WTC11 (cell line): ENCODE measurements at regions of chr17 and their contacts with region 1.

Region 1: DNA sequence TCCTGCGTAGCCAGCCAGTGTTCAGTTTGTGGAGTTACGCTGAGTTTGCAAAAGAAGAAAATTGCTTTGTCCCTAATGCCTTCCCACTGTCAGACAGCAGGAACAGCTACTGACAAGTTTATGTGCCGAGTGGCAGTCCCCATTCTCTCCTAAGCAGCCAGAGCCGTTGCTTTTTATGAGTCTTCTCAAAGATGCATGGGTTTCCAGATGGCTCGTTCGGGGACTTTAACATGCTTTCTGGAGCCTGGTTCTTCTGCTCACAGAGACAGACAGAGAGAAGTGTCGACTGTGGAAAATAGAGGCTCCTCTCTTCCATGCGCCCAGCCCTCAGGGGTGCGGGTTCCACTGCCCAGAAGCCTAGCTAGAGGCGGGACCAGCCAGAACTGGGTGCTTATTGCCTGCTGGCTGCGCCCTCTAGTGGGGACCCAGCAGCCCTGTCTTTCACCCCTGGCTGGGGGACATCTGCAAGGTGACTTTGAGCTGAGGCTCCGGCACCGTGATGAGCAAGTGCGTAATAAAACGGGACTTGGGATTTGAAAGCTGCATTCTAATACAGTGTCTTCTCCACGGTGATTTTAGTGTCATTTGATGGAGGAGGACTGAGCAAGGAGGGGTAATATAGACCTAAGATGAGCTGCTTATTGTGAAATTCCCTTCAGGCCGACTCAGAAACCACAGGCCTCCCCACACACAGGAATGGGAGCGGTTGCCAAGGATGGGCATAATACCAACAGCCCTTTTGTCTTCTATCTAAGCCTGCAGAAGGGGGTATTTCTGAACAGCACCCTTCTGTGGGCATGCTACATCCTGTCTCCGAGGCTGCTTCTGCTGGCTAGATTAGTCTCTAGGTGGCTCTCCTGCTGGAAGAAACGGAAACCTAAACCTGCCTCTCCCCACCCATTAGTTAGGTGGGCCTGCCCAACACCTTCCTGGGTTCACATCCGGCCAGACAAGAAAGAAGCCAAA is 73.1 kb downstream of the CCDC182 start:
- DNase-seq: peak; percentile 92
- ATAC-seq: peak; percentile 99
- H3K4me3 Mint-ChIP-seq: no peak overlapping the region
- H3K27ac Mint-ChIP-seq: no peak overlapping the region
- H3K4me1 Mint-ChIP-seq: peaks cover 14% of the 10 kb centered on the region
- H3K27me3 Mint-ChIP-seq: no peaks in the 10 kb centered on the region
- CTCF ChIP-seq: peak; percentile 91

Region 2: GRCh38 chr17:57440522-57441485 is 231.1 kb before region 1 on chr17:
- CTCF ChIA-PET with region 1: interaction called, 16 read pairs
- POLR2A ChIA-PET with region 1: no interaction called
- DNase-seq: peak; percentile 74
- ATAC-seq: peak; percentile 87
- H3K4me3 Mint-ChIP-seq: no peak overlapping the region
- H3K27ac Mint-ChIP-seq: peak overlapping the region; percentile 47
- H3K4me1 Mint-ChIP-seq: peaks cover 66% of the 10 kb centered on the region
- H3K27me3 Mint-ChIP-seq: no peaks in the 10 kb centered on the region
- CTCF ChIP-seq: peak; percentile 36; the same call in 1 of the 2 replicates

Region 3: DNA sequence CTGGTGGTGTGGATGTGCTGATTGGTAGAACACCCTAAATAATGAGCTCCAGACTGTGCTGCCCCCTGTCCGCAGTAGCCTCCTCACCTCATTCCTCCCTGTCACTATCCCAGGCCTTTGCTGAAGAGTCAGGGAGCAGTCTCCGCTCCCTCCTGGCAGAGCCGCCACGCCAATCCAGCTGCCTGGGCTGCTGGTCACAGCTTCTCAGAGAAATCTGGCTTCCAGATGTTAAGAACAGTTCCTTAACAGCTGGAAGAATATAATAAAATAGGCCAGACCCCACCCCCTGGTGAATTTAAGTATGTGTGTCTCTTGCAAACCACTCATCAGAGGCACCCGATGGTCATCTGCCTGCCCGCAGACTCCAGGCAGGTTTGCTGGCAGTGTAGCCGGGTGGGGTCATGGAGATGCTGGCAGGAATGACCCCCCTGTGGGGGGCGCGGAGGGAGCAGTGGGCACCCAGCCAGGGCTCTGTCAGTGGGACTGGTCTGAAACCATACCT is 87.8 kb before region 1 on chr17:
- CTCF ChIA-PET with region 1: interaction called, 11 read pairs
- POLR2A ChIA-PET with region 1: no interaction called
- DNase-seq: no peak
- ATAC-seq: peak; percentile 61
- H3K4me3 Mint-ChIP-seq: no peak overlapping the region
- H3K27ac Mint-ChIP-seq: no peak overlapping the region
- H3K4me1 Mint-ChIP-seq: peaks cover 25% of the 10 kb centered on the region
- H3K27me3 Mint-ChIP-seq: no peaks in the 10 kb centered on the region
- CTCF ChIP-seq: no peak

Region 4: DNA sequence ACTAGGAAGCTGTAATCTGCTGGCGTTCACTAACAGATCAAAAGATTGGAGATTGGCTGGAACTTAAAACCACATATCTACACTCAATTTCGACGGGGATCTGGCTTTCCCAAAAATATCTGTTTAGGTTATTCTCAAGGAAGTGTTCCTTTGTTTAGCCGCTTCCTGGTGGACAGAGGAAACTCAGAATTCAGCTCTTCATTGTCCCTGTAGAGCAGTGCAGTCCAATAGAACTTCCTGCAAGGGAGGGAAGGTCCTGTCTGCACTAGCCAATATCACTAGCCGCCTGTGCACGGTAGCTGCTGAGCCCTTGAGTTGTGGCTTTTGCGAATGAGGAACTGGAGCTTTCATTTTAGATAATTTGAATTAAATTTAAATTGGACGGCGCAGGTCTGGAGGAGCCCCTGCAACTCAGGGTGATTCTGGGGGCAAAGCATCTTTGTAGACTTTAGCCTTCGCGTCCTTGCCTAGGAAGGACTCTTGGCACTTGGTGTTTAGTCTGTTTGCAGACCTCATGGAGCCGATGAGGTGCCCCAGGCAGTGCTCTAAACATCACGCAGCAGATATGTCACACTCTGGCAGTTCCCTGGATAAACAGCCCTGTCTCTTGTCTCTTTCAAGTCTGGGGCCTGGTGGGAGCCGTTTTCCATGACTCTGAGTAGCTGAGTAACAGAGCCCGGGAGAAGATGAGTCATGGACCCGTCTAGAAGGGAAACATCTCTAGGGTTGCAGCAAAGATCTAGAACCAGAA is 49.1 kb before region 1 on chr17:
- CTCF ChIA-PET with region 1: interaction called, 26 read pairs
- POLR2A ChIA-PET with region 1: no interaction called
- DNase-seq: no peak
- ATAC-seq: no peak
- H3K4me3 Mint-ChIP-seq: no peak overlapping the region
- H3K27ac Mint-ChIP-seq: 0 out of 2 replicates have a peak overlapping the region, but pooled peaks have one; percentile 27
- H3K4me1 Mint-ChIP-seq: peaks cover 3% of the 10 kb centered on the region; the same call in 1 of the 2 replicates
- H3K27me3 Mint-ChIP-seq: no peaks in the 10 kb centered on the region
- CTCF ChIP-seq: no peak

Region 5: DNA sequence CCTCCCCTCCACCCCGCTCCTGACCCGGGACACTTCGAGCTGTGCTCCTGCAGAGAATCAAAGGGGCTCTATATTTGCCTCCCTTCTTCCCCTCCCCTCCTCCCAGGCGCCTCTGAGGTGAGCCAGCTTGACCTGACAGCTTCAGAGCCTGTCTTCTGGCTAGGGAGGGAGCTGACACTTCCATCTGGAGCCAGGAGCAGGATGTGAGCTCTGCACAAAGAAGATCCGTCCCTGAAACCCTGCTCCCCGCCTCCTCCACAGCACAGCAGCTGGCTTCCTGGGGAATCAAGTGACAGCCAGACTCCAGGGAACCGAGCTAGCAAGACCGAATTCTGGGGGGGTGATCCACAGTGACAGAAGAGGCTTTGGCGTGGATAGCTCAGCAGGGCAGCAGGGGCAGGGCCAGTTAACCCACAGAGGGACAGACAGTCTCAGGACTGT is 35.9 kb after region 1 on chr17:
- CTCF ChIA-PET with region 1: interaction called, 22 read pairs
- POLR2A ChIA-PET with region 1: no interaction called
- DNase-seq: peak; percentile 39
- ATAC-seq: peak; percentile 90
- H3K4me3 Mint-ChIP-seq: peak overlapping the region; percentile 46
- H3K27ac Mint-ChIP-seq: no peak overlapping the region
- H3K4me1 Mint-ChIP-seq: peaks cover 19% of the 10 kb centered on the region
- H3K27me3 Mint-ChIP-seq: peaks cover 14% of the 10 kb centered on the region
- CTCF ChIP-seq: no peak

Region 6: GRCh38 chr17:57761887-57762286 is 89.9 kb after region 1 on chr17:
- CTCF ChIA-PET with region 1: interaction called, 11 read pairs
- POLR2A ChIA-PET with region 1: no interaction called
- DNase-seq: no peak
- ATAC-seq: peak; percentile 45
- H3K4me3 Mint-ChIP-seq: no peak overlapping the region
- H3K27ac Mint-ChIP-seq: no peak overlapping the region
- H3K4me1 Mint-ChIP-seq: peaks cover 19% of the 10 kb centered on the region
- H3K27me3 Mint-ChIP-seq: peaks cover 6% of the 10 kb centered on the region; the same call in 1 of the 2 replicates
- CTCF ChIP-seq: no peak

Region 7: DNA sequence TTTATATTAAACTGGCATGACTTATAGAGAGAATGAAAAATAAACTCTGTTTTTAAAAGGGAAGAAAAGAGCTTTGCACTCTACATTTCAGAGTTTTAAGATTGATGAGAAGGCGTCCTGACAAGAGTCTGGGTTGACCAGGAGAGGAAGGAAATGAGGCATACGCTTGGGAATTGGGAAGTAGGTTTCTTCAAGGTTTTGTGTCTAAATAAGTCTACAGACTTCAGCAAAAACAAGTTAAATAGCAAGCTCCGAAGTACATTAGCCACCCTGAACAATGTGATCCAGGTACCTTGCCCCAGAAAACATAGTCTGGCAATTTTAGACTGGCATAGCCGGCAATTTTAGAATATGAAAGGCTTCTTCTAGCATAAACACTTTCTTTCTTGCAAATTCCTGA is 101.6 kb after region 1 on chr17:
- CTCF ChIA-PET with region 1: no interaction called
- POLR2A ChIA-PET with region 1: no interaction called
- DNase-seq: no peak
- ATAC-seq: no peak
- H3K4me3 Mint-ChIP-seq: no peak overlapping the region
- H3K27ac Mint-ChIP-seq: no peak overlapping the region
- H3K4me1 Mint-ChIP-seq: peaks cover 6% of the 10 kb centered on the region
- H3K27me3 Mint-ChIP-seq: peaks cover 21% of the 10 kb centered on the region
- CTCF ChIP-seq: no peak